Activated CD8-positive, alpha-beta T cell treated with anti-CD3 and anti-CD28 coated beads for 36 hours (primary cell): ENCODE measurements at regions of chr14 and their contacts with region 1.

Region 1: GRCh38 chr14:31529053-31529452 is 32.2 kb upstream of the NUBPL start:
- DNase-seq: no peak
- ATAC-seq: no peak
- H3K4me3 Mint-ChIP-seq: no peak overlapping the region
- H3K27ac Mint-ChIP-seq: no peak overlapping the region
- H3K4me1 Mint-ChIP-seq: no peaks in the 10 kb centered on the region
- H3K27me3 Mint-ChIP-seq: no peaks in the 10 kb centered on the region
- CTCF ChIP-seq: no peak

Region 2: DNA sequence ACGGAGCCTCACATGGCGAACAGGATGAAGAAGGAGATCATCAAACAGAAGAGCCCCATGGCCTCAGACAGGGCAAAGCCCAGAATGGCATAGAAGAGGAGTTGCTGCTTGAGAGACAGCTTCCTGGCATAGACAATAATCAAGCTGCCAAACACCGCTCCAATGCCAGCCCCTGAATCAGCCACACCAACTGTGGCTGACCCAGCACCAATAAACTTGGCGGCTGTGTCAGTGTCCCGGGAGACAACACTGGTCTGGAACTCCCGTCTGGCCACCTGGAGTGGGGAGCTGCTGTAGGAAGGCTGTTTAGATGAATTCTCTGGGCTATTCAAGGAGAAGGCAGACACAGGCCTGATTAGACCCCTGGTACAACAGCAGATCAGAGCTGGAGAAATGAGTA is 208.8 kb before region 1 on chr14:
- CTCF ChIA-PET with region 1: no interaction called
- POLR2A ChIA-PET with region 1: no interaction called
- intact Hi-C with region 1: no loop called
- DNase-seq: no peak
- ATAC-seq: no peak
- H3K4me3 Mint-ChIP-seq: no peak overlapping the region
- H3K27ac Mint-ChIP-seq: no peak overlapping the region
- H3K4me1 Mint-ChIP-seq: no peaks in the 10 kb centered on the region
- H3K27me3 Mint-ChIP-seq: no peaks in the 10 kb centered on the region
- CTCF ChIP-seq: no peak

Region 3: GRCh38 chr14:31388687-31389413 is 140.2 kb before region 1 on chr14:
- CTCF ChIA-PET with region 1: no interaction called
- POLR2A ChIA-PET with region 1: no interaction called
- intact Hi-C with region 1: no loop called
- DNase-seq: peak; percentile 16
- ATAC-seq: peak; percentile 54
- H3K4me3 Mint-ChIP-seq: no peak overlapping the region
- H3K27ac Mint-ChIP-seq: peak overlapping the region; percentile 74
- H3K4me1 Mint-ChIP-seq: peaks cover 28% of the 10 kb centered on the region
- H3K27me3 Mint-ChIP-seq: no peaks in the 10 kb centered on the region
- CTCF ChIP-seq: no peak

Region 4: GRCh38 chr14:32531942-32532515 is 1003.0 kb after region 1 on chr14:
- CTCF ChIA-PET with region 1: no interaction called
- POLR2A ChIA-PET with region 1: no interaction called
- intact Hi-C with region 1: loop called (anchors 5 kb)
- DNase-seq: no peak
- ATAC-seq: no peak
- H3K4me3 Mint-ChIP-seq: no peak overlapping the region
- H3K27ac Mint-ChIP-seq: no peak overlapping the region
- H3K4me1 Mint-ChIP-seq: no peaks in the 10 kb centered on the region
- H3K27me3 Mint-ChIP-seq: no peaks in the 10 kb centered on the region
- CTCF ChIP-seq: no peak